T-cell (primary cell): ENCODE measurements at regions of chr17 and their contacts with region 1.

Region 1: GRCh38 chr17:38628441-38628840 is 22.7 kb upstream of the SRCIN1 start:
- DNase-seq: no peak
- ATAC-seq: no peak
- H3K4me3 ChIP-seq: no peak overlapping the region
- H3K4me3 Mint-ChIP-seq: no peak overlapping the region
- H3K27ac ChIP-seq: no peak overlapping the region
- H3K27ac Mint-ChIP-seq: no peak overlapping the region
- H3K4me1 ChIP-seq: peaks cover 0 to 7% of the 10 kb centered on the region in 2 experiments
- H3K4me1 Mint-ChIP-seq: peaks cover 0 to 4% (median 4%) of the 10 kb centered on the region in 3 donors
- H3K27me3 ChIP-seq: peaks cover 0 to 18% of the 10 kb centered on the region in 2 experiments
- H3K27me3 Mint-ChIP-seq: peaks cover 7 to 20% of the 10 kb centered on the region in 2 donors

Region 2: DNA sequence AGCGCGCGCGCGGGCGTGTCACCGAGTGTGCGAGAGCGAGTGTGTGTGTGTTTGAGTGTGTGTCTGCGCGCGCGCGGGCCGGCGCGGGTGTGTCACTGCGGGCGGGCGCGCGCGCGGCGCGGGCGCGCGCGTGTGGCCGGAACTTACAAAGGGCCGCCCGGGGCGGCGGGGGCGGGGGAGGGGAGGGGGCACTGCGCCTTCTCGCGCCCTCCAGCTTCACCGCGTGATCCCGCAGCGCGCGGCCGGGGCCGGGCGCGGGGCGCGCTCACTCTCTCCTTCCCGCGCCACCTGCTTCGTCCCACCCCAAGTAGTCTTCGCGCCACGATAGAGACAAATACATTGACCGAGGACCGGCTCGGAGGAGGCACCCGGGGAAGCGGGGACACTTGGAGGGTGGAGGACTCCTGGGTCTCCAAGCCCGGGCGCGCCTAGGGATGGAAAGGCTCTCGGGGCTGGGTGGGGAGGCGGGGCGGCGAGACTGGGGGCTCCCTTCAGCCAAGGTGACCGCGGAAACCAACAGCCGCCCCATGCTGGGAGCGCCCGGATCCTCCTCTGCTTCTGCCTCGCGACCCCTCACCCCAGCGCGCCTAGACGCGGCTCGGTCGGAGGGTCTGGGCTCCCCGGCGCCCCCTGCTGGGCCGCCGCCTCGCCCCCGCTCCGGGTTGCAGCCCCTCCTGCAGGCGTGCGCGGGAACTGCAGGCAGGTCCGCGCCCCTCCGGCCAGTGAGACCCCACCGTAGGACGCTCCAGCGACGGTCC is 22.4 kb before region 1 on chr17 and contains the start of gene SRCIN1:
- CTCF ChIA-PET with region 1: no interaction called
- POLR2A ChIA-PET with region 1: no interaction called
- DNase-seq: peak in 23 of 35 experiments; percentile 12 to 55 (median 25)
- ATAC-seq: peak; percentile 49 to 59 (median 52)
- H3K4me3 ChIP-seq: peak within 1 kb of the TSS; percentile 49 to 59
- H3K4me3 Mint-ChIP-seq: peak within 1 kb of the TSS; percentile 54 to 77 (median 68)
- H3K27ac ChIP-seq: no peak within 1 kb of the TSS
- H3K27ac Mint-ChIP-seq: no peak within 1 kb of the TSS
- H3K4me1 ChIP-seq: peaks cover 3 to 27% of the 10 kb centered on the region in 2 experiments
- H3K4me1 Mint-ChIP-seq: peaks cover 17 to 21% (median 19%) of the 10 kb centered on the region in 3 donors
- H3K27me3 ChIP-seq: peaks cover 10 to 94% of the 10 kb centered on the region in 2 experiments
- H3K27me3 Mint-ChIP-seq: peaks cover 48 to 71% of the 10 kb centered on the region in 2 donors
- total RNA-seq, gene SRCIN1: 0.13 to 0.85 (median 0.28) TPM in 4 of 5 donors, not detected in the other

Region 3: GRCh38 chr17:39118674-39119419 is 490.4 kb after region 1 on chr17:
- CTCF ChIA-PET with region 1: no interaction called
- POLR2A ChIA-PET with region 1: interaction called in 1 of 2 experiments, 13 read pairs
- DNase-seq: no peak
- ATAC-seq: no peak
- H3K4me3 ChIP-seq: no peak overlapping the region
- H3K4me3 Mint-ChIP-seq: no peak overlapping the region
- H3K27ac ChIP-seq: no peak overlapping the region
- H3K27ac Mint-ChIP-seq: no peak overlapping the region
- H3K4me1 ChIP-seq: no peaks in the 10 kb centered on the region
- H3K4me1 Mint-ChIP-seq: peaks cover 5 to 11% (median 10%) of the 10 kb centered on the region in 3 donors
- H3K27me3 ChIP-seq: no peaks in the 10 kb centered on the region
- H3K27me3 Mint-ChIP-seq: no peaks in the 10 kb centered on the region